T-cell (primary cell): ENCODE measurements at regions of chr2 and their contacts with region 1.

Region 1: DNA sequence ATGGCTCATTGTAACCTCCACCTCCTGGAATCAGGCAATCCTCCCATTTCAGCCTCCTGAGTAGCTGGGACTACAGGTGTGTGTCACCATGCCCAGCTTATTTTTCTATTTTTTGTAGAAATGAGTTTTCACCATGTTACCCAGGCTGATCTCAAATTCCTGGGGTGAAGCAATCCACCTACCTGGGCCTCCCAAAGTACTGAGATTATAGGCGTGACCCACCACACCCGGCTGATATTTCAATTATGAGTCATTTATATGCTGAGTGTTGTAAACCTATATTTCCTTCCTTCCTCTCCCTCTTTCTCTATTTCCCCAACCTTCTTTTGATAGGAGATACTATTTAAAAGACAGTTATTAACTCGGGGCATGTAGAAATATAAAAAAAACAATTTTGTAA is 469.6 kb upstream of the ID2 start:
- DNase-seq: no peak
- ATAC-seq: no peak
- H3K4me3 ChIP-seq: no peak overlapping the region
- H3K4me3 Mint-ChIP-seq: no peak overlapping the region
- H3K27ac ChIP-seq: no peak overlapping the region
- H3K27ac Mint-ChIP-seq: no peak overlapping the region
- H3K4me1 ChIP-seq: no peaks in the 10 kb centered on the region
- H3K4me1 Mint-ChIP-seq: no peaks in the 10 kb centered on the region
- H3K27me3 ChIP-seq: no peaks in the 10 kb centered on the region
- H3K27me3 Mint-ChIP-seq: no peaks in the 10 kb centered on the region

Region 2: DNA sequence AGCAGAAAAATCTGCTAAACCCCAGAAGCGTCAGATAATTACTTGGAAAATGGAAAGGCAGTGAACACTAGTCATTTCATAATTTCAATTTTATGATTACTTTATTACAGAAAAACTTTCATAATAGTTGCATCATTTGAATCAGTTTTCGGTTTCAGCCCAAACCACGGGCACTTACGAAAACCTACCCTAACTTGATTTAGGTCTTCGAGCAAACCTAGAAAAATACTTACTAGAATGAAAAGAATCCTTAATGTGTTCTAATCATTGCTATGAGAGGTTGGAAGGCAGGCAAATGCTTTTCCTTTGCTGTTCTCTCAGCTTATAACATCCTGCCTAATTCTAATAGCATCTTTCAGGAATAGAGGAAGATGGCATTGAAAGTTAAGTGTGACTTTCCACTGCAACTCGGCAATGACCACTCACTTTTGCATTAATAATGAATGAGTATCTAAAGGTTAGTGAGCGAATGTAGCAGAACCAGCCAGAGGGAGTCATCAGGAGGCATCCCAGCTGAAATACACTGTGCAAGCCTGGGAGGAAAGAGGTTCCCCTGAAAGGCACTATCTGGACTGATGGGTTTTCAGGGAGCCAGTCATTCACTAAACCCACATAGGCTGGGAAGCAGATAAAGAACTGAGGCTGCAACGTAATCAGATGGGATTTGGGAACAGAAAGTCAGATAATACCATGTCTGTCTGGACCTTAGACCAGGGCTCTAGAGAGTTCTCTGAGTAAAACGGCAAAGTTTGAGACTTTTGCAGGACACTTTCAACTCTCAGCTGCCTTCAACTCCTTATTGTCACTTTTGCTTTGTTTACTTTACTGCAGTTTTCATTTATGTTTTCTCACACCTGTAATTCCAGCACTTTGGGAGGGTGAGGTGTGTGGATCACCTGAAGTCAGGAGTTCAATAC is 774.3 kb before region 1 on chr2:
- CTCF ChIA-PET with region 1: no interaction called
- POLR2A ChIA-PET with region 1: interaction called in 1 of 2 experiments, 10 read pairs
- DNase-seq: no peak
- ATAC-seq: peak in 1 of 4 experiments; percentile 29
- H3K4me3 ChIP-seq: no peak overlapping the region
- H3K4me3 Mint-ChIP-seq: peak overlapping the region in 2 of 3 donors; percentile 7 to 46
- H3K27ac ChIP-seq: peak overlapping the region; percentile 70
- H3K27ac Mint-ChIP-seq: peak overlapping the region; percentile 62 to 85
- H3K4me1 ChIP-seq: peaks cover 5 to 27% of the 10 kb centered on the region in 2 experiments
- H3K4me1 Mint-ChIP-seq: peaks cover 38 to 66% (median 56%) of the 10 kb centered on the region in 3 donors
- H3K27me3 ChIP-seq: no peaks in the 10 kb centered on the region
- H3K27me3 Mint-ChIP-seq: no peaks in the 10 kb centered on the region

Region 3: GRCh38 chr2:8189316-8189715 is 22.9 kb before region 1 on chr2:
- CTCF ChIA-PET with region 1: no interaction called
- POLR2A ChIA-PET with region 1: no interaction called
- DNase-seq: no peak
- ATAC-seq: no peak
- H3K4me3 ChIP-seq: no peak overlapping the region
- H3K4me3 Mint-ChIP-seq: no peak overlapping the region
- H3K27ac ChIP-seq: no peak overlapping the region
- H3K27ac Mint-ChIP-seq: no peak overlapping the region
- H3K4me1 ChIP-seq: no peaks in the 10 kb centered on the region
- H3K4me1 Mint-ChIP-seq: no peaks in the 10 kb centered on the region
- H3K27me3 ChIP-seq: no peaks in the 10 kb centered on the region
- H3K27me3 Mint-ChIP-seq: peaks cover 0 to 9% of the 10 kb centered on the region in 2 donors